Activated CD4-positive, alpha-beta T cell treated with anti-CD3 and anti-CD28 coated beads, Interleukin-2, amount 10 ng/mL, durations not matched to agents 24 days and 14 days (primary cell): ENCODE measurements at regions of chr1 and their contacts with region 1.

Region 1: DNA sequence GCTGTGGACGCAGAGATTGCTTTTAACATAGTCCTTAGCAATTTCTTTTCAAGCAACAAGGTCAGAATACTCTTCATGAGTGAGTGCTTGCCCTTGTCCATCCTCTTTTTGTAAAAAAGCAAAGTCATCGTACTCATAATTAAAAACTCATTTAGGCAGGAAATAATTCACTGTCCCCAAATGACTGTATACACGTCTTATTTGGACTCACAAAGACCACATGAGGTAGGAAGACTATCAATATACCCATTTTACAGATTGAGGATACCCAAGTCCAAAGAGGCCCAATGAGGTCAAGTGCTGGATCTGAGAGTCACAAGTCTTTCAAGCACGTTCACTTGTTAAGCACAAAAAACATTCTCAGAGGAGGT is 13.2 kb downstream of the ITPKB start:
- DNase-seq: no peak
- H3K4me3 Mint-ChIP-seq: peak overlapping the region; percentile 78
- H3K27ac Mint-ChIP-seq: peak overlapping the region; percentile 90
- H3K4me1 Mint-ChIP-seq: peaks cover 80% of the 10 kb centered on the region
- H3K27me3 Mint-ChIP-seq: no peaks in the 10 kb centered on the region

Region 2: DNA sequence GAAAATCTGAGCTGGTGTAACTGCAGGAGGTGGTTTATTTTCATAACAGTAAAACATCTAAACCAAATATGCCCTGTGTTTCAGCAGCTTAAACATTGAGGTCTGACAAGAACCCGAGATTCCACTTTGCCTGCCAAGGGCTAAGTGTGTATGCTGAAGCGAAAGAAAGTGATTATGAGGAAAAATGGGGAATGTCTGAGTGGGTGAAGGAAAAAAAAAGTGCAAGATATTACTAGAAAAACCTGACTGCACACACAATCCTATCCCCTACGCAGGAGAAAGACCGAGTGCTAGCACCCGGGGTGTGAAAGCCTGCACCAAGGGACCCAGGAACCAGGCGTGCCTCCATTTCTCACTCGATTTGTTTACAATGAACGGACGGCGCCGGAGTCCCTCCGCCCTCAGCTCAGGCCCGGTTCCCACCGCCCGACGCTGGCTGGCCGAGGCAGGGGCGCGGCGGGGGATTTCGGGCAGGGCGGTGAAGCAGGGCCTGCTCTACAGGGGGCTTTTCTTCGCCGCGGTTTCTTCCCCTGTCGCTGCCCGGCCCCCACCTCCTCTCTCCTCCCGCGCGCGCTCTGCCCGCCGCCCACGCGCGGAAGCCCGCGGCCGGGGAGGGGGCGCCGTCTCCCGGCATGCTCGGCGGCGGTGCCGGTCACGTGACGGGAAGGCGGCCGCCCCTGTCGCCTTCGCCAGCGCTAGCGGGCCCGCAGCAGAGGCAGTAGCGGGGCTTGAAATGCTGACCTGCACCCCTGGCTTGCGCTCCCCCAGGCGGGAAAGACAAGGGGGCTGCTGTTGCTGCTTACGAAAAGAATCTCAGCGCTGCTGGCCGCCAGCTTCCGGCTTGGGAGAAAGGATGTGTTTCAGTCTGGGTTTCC is 22.7 kb before region 1 on chr1:
- intact Hi-C with region 1: loop called (anchors 1 kb)
- DNase-seq: peak; percentile 96
- H3K4me3 Mint-ChIP-seq: peak overlapping the region; percentile 86
- H3K27ac Mint-ChIP-seq: peak overlapping the region; percentile 92
- H3K4me1 Mint-ChIP-seq: peaks cover 48% of the 10 kb centered on the region
- H3K27me3 Mint-ChIP-seq: no peaks in the 10 kb centered on the region

Region 3: DNA sequence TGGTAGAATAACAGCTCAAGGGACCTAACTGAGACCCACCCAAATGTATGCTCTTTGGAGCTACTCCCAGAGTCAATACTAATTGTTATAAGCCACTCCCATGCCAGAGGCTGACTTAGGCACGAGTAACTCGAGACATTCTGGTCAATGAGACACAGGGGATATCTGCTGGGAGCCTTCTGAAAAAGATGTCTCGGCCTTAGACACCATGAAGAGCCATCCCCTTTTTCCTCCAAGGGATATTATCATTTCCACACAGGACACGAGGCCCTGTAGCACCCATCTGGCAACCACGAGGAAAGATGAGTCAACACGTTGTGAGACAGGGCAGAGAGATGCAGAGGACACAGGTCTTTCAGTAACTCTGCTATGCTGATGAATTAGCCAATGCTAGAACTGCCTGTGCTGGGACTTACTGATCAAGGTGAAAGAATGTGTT is 17.5 kb before region 1 on chr1:
- intact Hi-C with region 1: loop called (anchors 1 kb)
- DNase-seq: no peak
- H3K4me3 Mint-ChIP-seq: peak overlapping the region; percentile 71
- H3K27ac Mint-ChIP-seq: peak overlapping the region; percentile 93
- H3K4me1 Mint-ChIP-seq: peaks cover 69% of the 10 kb centered on the region
- H3K27me3 Mint-ChIP-seq: no peaks in the 10 kb centered on the region